Activated CD4-positive, alpha-beta T cell treated with anti-CD3 and anti-CD28 coated beads for 36 hours (primary cell): ENCODE measurements at regions of chr18 and their contacts with region 1.

Region 1: GRCh38 chr18:765764-766549 is 46.1 kb downstream of the YES1 start:
- DNase-seq: no peak
- ATAC-seq: no peak
- H3K4me3 Mint-ChIP-seq: no peak overlapping the region
- H3K27ac Mint-ChIP-seq: no peak overlapping the region
- H3K4me1 Mint-ChIP-seq: peaks cover 10% of the 10 kb centered on the region
- H3K27me3 Mint-ChIP-seq: no peaks in the 10 kb centered on the region

Region 2: DNA sequence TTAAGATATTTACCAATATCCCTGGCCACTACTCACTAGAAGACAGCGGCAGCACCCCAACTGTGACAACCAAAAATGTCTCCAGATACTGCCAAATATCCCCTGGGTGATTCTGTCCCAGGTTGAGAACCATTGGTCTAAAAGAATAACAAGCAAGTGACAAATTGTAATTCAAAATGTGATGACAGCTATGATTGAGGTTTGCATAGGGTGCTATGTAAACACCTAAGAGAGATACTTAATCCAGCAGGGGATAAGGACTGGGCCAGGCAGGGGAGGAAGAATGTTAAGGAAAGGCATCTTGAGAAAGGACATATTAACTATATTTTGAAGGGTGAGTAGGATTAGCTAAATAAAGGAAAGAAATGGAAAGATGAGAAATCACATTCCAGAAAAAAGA is 15.5 kb before region 1 on chr18:
- CTCF ChIA-PET with region 1: no interaction called
- POLR2A ChIA-PET with region 1: no interaction called
- intact Hi-C with region 1: no loop called
- DNase-seq: no peak
- ATAC-seq: no peak
- H3K4me3 Mint-ChIP-seq: no peak overlapping the region
- H3K27ac Mint-ChIP-seq: no peak overlapping the region
- H3K4me1 Mint-ChIP-seq: no peaks in the 10 kb centered on the region
- H3K27me3 Mint-ChIP-seq: no peaks in the 10 kb centered on the region

Region 3: GRCh38 chr18:805008-805754 is 39.2 kb after region 1 on chr18:
- CTCF ChIA-PET with region 1: interaction called, 5 read pairs
- POLR2A ChIA-PET with region 1: no interaction called
- intact Hi-C with region 1: loop called in 1 of 2 experiments (anchors 5 kb)
- DNase-seq: no peak
- ATAC-seq: peak; percentile 25
- H3K4me3 Mint-ChIP-seq: peak overlapping the region; percentile 43
- H3K27ac Mint-ChIP-seq: peak overlapping the region; percentile 40
- H3K4me1 Mint-ChIP-seq: peaks cover 60% of the 10 kb centered on the region
- H3K27me3 Mint-ChIP-seq: no peaks in the 10 kb centered on the region